Activated naive CD4-positive, alpha-beta T cell treated with anti-CD3 and anti-CD28 coated beads, Interleukin-2, amount 10 ng/mL, durations not matched to agents 7 days and 5 days (primary cell): ENCODE measurements at regions of chr10 and their contacts with region 1.

Region 1: GRCh38 chr10:71708301-71708703 is 11.3 kb downstream of the C10orf105 start:
- DNase-seq: peak; percentile 78
- H3K4me3 Mint-ChIP-seq: no peak overlapping the region
- H3K27ac Mint-ChIP-seq: peak overlapping the region; percentile 67
- H3K4me1 Mint-ChIP-seq: peaks cover 46% of the 10 kb centered on the region
- H3K27me3 Mint-ChIP-seq: peaks cover 7% of the 10 kb centered on the region

Region 2: DNA sequence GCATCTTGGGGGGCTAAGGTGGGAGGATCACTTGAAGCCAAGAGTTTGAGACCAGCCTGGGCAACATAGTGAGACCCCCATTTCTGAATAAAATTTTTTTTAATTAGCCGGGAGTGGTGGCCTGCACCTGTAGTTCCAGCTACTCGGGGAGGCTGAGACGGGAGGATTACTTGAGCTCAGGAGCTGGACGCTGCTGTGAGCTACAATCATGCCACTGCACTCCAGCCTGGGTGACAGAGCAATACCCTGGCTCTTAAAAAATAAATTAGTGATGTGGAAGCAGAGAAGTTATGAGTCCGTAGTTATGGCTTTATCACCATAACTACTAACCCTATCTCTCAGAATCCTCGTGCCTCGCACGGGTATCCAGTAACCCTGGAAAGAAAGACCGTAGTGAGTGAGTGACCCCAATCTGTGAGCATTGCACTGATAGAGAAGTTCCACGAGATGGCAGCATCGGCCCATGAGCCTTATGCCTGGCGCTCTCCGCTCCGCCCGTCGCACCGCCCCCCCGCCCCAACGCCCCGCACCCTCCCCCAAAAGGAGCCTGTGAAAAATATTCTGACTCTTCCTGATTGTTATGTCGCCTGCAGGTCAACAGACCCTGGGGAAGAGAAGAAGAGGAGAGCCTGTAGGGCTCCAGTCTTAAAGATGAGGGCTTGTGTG is 394.1 kb before region 1 on chr10:
- CTCF ChIA-PET with region 1: interaction called, 18 read pairs
- DNase-seq: peak; percentile 73
- H3K4me3 Mint-ChIP-seq: no peak overlapping the region
- H3K27ac Mint-ChIP-seq: no peak overlapping the region
- H3K4me1 Mint-ChIP-seq: peaks cover 27% of the 10 kb centered on the region
- H3K27me3 Mint-ChIP-seq: peaks cover 43% of the 10 kb centered on the region

Region 3: GRCh38 chr10:71696628-71697326 is 11.5 kb before region 1 on chr10:
- CTCF ChIA-PET with region 1: interaction called, 126 read pairs
- DNase-seq: peak; percentile 75
- H3K4me3 Mint-ChIP-seq: no peak overlapping the region
- H3K27ac Mint-ChIP-seq: no peak overlapping the region
- H3K4me1 Mint-ChIP-seq: peaks cover 56% of the 10 kb centered on the region
- H3K27me3 Mint-ChIP-seq: peaks cover 27% of the 10 kb centered on the region

Region 4: GRCh38 chr10:71727738-71728737 is 19.7 kb after region 1 on chr10:
- CTCF ChIA-PET with region 1: interaction called, 22 read pairs
- DNase-seq: peak; percentile 78
- H3K4me3 Mint-ChIP-seq: peak overlapping the region; percentile 36
- H3K27ac Mint-ChIP-seq: peak overlapping the region; percentile 99
- H3K4me1 Mint-ChIP-seq: peaks cover 89% of the 10 kb centered on the region
- H3K27me3 Mint-ChIP-seq: no peaks in the 10 kb centered on the region

Region 5: GRCh38 chr10:71756311-71757191 is 48.2 kb after region 1 on chr10:
- CTCF ChIA-PET with region 1: interaction called, 24 read pairs
- DNase-seq: no peak
- H3K4me3 Mint-ChIP-seq: peak overlapping the region; percentile 61
- H3K27ac Mint-ChIP-seq: peak overlapping the region; percentile 97
- H3K4me1 Mint-ChIP-seq: peaks cover 94% of the 10 kb centered on the region
- H3K27me3 Mint-ChIP-seq: no peaks in the 10 kb centered on the region

Region 6: GRCh38 chr10:71812016-71812912 is 104.0 kb after region 1 on chr10:
- CTCF ChIA-PET with region 1: interaction called, 45 read pairs
- DNase-seq: peak; percentile 84
- H3K4me3 Mint-ChIP-seq: no peak overlapping the region
- H3K27ac Mint-ChIP-seq: no peak overlapping the region
- H3K4me1 Mint-ChIP-seq: peaks cover 2% of the 10 kb centered on the region
- H3K27me3 Mint-ChIP-seq: no peaks in the 10 kb centered on the region